ENCODE measurements at regions of chr2 and their contacts with region 1.

Region 1: GRCh38 chr2:39227628-39228412 is 15.9 kb downstream of the CDKL4 start:
- DNase-seq: peak; percentile 81
- H3K4me3 ChIP-seq: no peak overlapping the region
- H3K27ac ChIP-seq: no peak overlapping the region
- H3K4me1 ChIP-seq: peaks cover 0 to 2% of the 10 kb centered on the region in 2 experiments; a peak in 1 of 4 replicates
- H3K27me3 ChIP-seq: no peaks in the 10 kb centered on the region
- CTCF ChIP-seq: peak; percentile 99
- EP300 ChIP-seq: no peak
- RAD21 ChIP-seq: peak; percentile 90

Region 2: GRCh38 chr2:38922902-38923301 is 304.9 kb before region 1 on chr2:
- CTCF ChIA-PET with region 1: interaction called, 10 read pairs
- POLR2A ChIA-PET with region 1: no interaction called
- DNase-seq: no peak
- H3K4me3 ChIP-seq: no peak overlapping the region
- H3K27ac ChIP-seq: no peak overlapping the region
- H3K4me1 ChIP-seq: no peaks in the 10 kb centered on the region; a peak in 1 of 4 replicates
- H3K27me3 ChIP-seq: no peaks in the 10 kb centered on the region
- CTCF ChIP-seq: no peak
- EP300 ChIP-seq: no peak
- RAD21 ChIP-seq: no peak

Region 3: DNA sequence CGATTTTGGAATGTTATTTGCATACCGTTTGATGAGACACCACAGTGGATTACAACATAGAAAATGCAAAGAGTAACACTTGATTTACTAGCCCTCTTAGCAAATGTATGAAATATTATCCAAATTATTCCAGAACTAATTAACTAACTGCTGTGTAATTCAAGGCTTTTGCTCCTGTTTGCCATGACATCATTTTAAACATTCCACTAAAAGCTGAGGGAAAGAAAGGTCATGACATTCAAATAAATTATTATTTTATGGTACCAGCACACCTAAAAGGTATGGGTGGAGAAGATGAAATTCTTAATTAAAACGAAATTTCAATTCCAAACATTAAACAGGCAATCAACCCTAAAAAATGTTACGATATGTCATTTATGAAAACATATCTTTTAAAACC is 199.0 kb before region 1 on chr2:
- CTCF ChIA-PET with region 1: interaction called, 11 read pairs
- POLR2A ChIA-PET with region 1: no interaction called
- DNase-seq: no peak
- H3K4me3 ChIP-seq: no peak overlapping the region
- H3K27ac ChIP-seq: no peak overlapping the region
- H3K4me1 ChIP-seq: peaks cover 0 to 5% of the 10 kb centered on the region in 2 experiments; a peak in 1 of 4 replicates
- H3K27me3 ChIP-seq: no peaks in the 10 kb centered on the region
- CTCF ChIP-seq: no peak
- EP300 ChIP-seq: no peak
- RAD21 ChIP-seq: no peak

Region 4: GRCh38 chr2:39069136-39069515 is 158.7 kb before region 1 on chr2:
- CTCF ChIA-PET with region 1: interaction called, 300 read pairs
- POLR2A ChIA-PET with region 1: no interaction called
- DNase-seq: no peak
- H3K4me3 ChIP-seq: no peak overlapping the region
- H3K27ac ChIP-seq: no peak overlapping the region
- H3K4me1 ChIP-seq: no peaks in the 10 kb centered on the region
- H3K27me3 ChIP-seq: no peaks in the 10 kb centered on the region
- CTCF ChIP-seq: no peak
- EP300 ChIP-seq: no peak
- RAD21 ChIP-seq: peak; percentile 48

Region 5: GRCh38 chr2:39124000-39124745 is 103.6 kb before region 1 on chr2:
- CTCF ChIA-PET with region 1: interaction called, 131 read pairs
- POLR2A ChIA-PET with region 1: interaction called, 9 read pairs
- DNase-seq: peak; percentile 95
- H3K4me3 ChIP-seq: peak overlapping the region; percentile 87 to 89
- H3K27ac ChIP-seq: peak overlapping the region; percentile 70 to 97
- H3K4me1 ChIP-seq: peaks cover 6 to 34% of the 10 kb centered on the region in 2 experiments; a peak in 3 of 4 replicates
- H3K27me3 ChIP-seq: no peaks in the 10 kb centered on the region
- CTCF ChIP-seq: peak; percentile 68
- EP300 ChIP-seq: peak in 1 of 2 experiments; percentile 48; a peak in 1 of 4 replicates
- RAD21 ChIP-seq: peak; percentile 41; the same call in 1 of the 2 replicates

Region 6: GRCh38 chr2:39217192-39217550 is 10.6 kb before region 1 on chr2:
- CTCF ChIA-PET with region 1: interaction called, 21 read pairs
- POLR2A ChIA-PET with region 1: no interaction called
- DNase-seq: no peak
- H3K4me3 ChIP-seq: no peak overlapping the region
- H3K27ac ChIP-seq: no peak overlapping the region
- H3K4me1 ChIP-seq: peaks cover 0 to 3% of the 10 kb centered on the region in 2 experiments; a peak in 1 of 4 replicates
- H3K27me3 ChIP-seq: no peaks in the 10 kb centered on the region
- CTCF ChIP-seq: no peak
- EP300 ChIP-seq: no peak
- RAD21 ChIP-seq: no peak

Measured in SK-N-SH (cell line).